Breast epithelium (tissue), 4 donors: ENCODE measurements at regions of chr13 and their contacts with region 1.

Region 1: GRCh38 chr13:49559006-49559405 is 26.4 kb downstream of the RCBTB1 start:
- DNase-seq: no peak
- H3K4me3 ChIP-seq: no peak overlapping the region
- H3K27ac ChIP-seq: no peak overlapping the region
- H3K4me1 ChIP-seq: no peaks in the 10 kb centered on the region
- H3K27me3 ChIP-seq: no peaks in the 10 kb centered on the region
- CTCF ChIP-seq: no peak
- POLR2A ChIP-seq: no peak

Region 2: GRCh38 chr13:49585220-49586157 is 26.5 kb after region 1 on chr13 and contains the start of gene RCBTB1:
- intact Hi-C with region 1: no loop called
- DNase-seq: peak; percentile 66 to 67
- H3K4me3 ChIP-seq: peak within 1 kb of the TSS; percentile 60 to 80 (median 69)
- H3K27ac ChIP-seq: peak within 1 kb of the TSS; percentile 71 to 90
- H3K4me1 ChIP-seq: peaks cover 0 to 4% of the 10 kb centered on the region in 2 donors
- H3K27me3 ChIP-seq: no peaks in the 10 kb centered on the region
- CTCF ChIP-seq: no peak
- POLR2A ChIP-seq: no peak
- total RNA-seq, gene RCBTB1: 13.8 to 18.4 (median 17.9) TPM

Region 3: GRCh38 chr13:50668691-50669271 is 1109.8 kb after region 1 on chr13:
- intact Hi-C with region 1: loop called (anchors 5 kb)
- DNase-seq: no peak
- H3K4me3 ChIP-seq: no peak overlapping the region
- H3K27ac ChIP-seq: no peak overlapping the region
- H3K4me1 ChIP-seq: peaks cover 0 to 9% of the 10 kb centered on the region in 2 donors
- H3K27me3 ChIP-seq: no peaks in the 10 kb centered on the region
- CTCF ChIP-seq: no peak
- POLR2A ChIP-seq: no peak